ENCODE measurements at regions of chr4 and their contacts with region 1.

Region 1: GRCh38 chr4:138680989-138681604 is 334.5 kb upstream of the NOCT start:
- DNase-seq: peak; percentile 73
- H3K4me3 ChIP-seq: no peak overlapping the region
- H3K27ac ChIP-seq: no peak overlapping the region
- H3K4me1 ChIP-seq: no peaks in the 10 kb centered on the region
- H3K27me3 ChIP-seq: no peaks in the 10 kb centered on the region
- CTCF ChIP-seq: peak; percentile 83 to 99 (median 91)
- POLR2A ChIP-seq: no peak

Region 2: GRCh38 chr4:138182838-138183426 is 498.2 kb before region 1 on chr4:
- intact Hi-C with region 1: loop called (anchors 5 kb)
- DNase-seq: peak; percentile 24
- H3K4me3 ChIP-seq: no peak overlapping the region
- H3K27ac ChIP-seq: no peak overlapping the region
- H3K4me1 ChIP-seq: no peaks in the 10 kb centered on the region
- H3K27me3 ChIP-seq: no peaks in the 10 kb centered on the region
- CTCF ChIP-seq: peak in 3 of 4 experiments; percentile 53 to 71 (median 68)
- POLR2A ChIP-seq: no peak

Region 3: GRCh38 chr4:138870737-138871554 is 189.8 kb after region 1 on chr4:
- intact Hi-C with region 1: loop called (anchors 10 kb)
- DNase-seq: peak; percentile 70
- H3K4me3 ChIP-seq: no peak overlapping the region
- H3K27ac ChIP-seq: no peak overlapping the region
- H3K4me1 ChIP-seq: no peaks in the 10 kb centered on the region
- H3K27me3 ChIP-seq: no peaks in the 10 kb centered on the region
- CTCF ChIP-seq: peak; percentile 72 to 88 (median 86)
- POLR2A ChIP-seq: no peak

Measured in prostate gland (tissue), 2 donors.